CD8-positive, alpha-beta T cell (primary cell): ENCODE measurements at regions of chr19 and their contacts with region 1.

Region 1: GRCh38 chr19:18058208-18059030 is 28.3 kb downstream of the IL12RB1 start:
- DNase-seq: peak; percentile 67 to 92 (median 83)
- ATAC-seq: peak; percentile 98
- H3K4me3 ChIP-seq: peak overlapping the region in 1 of 2 experiments; percentile 23
- H3K4me3 Mint-ChIP-seq: peak overlapping the region; percentile 18
- H3K27ac ChIP-seq: peak overlapping the region; percentile 35 to 60
- H3K27ac Mint-ChIP-seq: peak overlapping the region; percentile 86
- H3K4me1 ChIP-seq: peaks cover 17% of the 10 kb centered on the region
- H3K4me1 Mint-ChIP-seq: peaks cover 12% of the 10 kb centered on the region
- H3K27me3 ChIP-seq: no peaks in the 10 kb centered on the region
- H3K27me3 Mint-ChIP-seq: no peaks in the 10 kb centered on the region
- CTCF ChIP-seq: peak; percentile 95

Region 2: DNA sequence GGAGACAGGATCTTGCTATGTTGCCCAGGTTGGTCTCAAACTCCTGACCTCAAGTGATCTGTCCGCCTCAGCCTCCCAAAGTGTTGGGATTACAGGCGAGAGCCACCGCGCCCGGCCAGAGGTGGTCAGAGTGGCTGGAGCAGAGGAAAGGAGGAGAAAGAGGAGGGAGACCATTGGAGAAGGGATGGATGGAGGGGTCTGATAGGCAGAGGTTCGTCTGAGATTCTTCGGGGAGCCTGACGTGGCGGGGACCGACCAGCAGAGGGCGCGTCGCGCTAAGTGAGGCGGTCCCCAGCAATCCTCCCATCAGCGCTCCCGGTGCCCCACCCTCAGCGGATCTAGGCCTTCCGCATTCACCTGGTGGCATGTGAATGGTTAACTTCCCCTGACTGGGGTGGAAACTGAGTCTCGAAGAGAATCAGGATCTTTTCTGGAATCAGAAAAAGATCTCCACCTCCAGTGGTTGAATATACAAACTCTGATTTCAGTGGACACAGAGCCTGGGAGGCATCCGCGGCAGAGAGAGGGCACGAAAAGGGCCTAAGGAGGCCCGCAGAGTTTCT is 712.2 kb before region 1 on chr19:
- CTCF ChIA-PET with region 1: no interaction called
- POLR2A ChIA-PET with region 1: no interaction called
- intact Hi-C with region 1: no loop called
- DNase-seq: peak; percentile 57 to 87 (median 78)
- ATAC-seq: peak; percentile 99
- H3K4me3 ChIP-seq: no peak overlapping the region
- H3K4me3 Mint-ChIP-seq: no peak overlapping the region
- H3K27ac ChIP-seq: no peak overlapping the region
- H3K27ac Mint-ChIP-seq: no peak overlapping the region
- H3K4me1 ChIP-seq: no peaks in the 10 kb centered on the region
- H3K4me1 Mint-ChIP-seq: peaks cover 5% of the 10 kb centered on the region
- H3K27me3 ChIP-seq: peaks cover 0 to 5% of the 10 kb centered on the region in 2 experiments
- H3K27me3 Mint-ChIP-seq: peaks cover 8% of the 10 kb centered on the region
- CTCF ChIP-seq: peak; percentile 97

Region 3: DNA sequence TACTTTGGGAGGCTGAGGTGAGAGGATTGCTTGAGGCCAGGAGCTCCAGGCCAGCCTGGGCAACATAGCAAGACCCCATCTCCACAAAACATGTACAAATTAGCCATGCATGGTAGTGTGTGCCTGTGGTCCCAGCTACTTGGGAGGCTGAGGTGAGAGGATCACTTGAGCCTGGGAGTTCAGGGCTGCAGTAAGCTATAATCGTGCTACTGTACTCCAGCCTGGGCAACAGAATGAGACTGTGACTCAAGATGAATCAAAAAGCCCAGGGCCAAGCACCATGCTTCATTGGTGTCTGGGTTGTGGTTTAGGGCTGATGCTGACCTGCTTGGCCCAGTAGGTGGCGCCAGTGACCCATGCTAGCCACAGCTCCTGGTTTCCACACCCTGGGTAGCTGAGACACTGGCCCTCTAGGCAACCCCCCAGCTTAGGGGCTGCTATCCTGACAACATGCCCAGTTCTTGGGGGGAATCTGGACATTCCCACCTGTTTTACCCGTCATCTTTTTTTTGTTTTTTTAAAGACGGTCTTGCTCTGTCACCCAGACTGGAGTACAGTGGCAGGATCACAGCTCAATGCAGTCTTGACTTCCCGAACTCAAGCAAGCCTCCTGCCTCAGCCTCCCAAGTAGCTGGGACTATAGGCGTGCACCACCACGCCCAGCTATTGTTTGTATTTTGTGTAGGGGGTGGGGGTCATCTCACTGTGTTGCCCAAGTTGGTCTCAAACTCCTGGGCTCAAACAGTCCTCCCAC is 120.2 kb before region 1 on chr19:
- CTCF ChIA-PET with region 1: interaction called, 55 read pairs
- POLR2A ChIA-PET with region 1: interaction called, 3 read pairs
- intact Hi-C with region 1: loop called (anchors 1 kb)
- DNase-seq: peak; percentile 69 to 90 (median 83)
- ATAC-seq: peak; percentile 99
- H3K4me3 ChIP-seq: no peak overlapping the region
- H3K4me3 Mint-ChIP-seq: no peak overlapping the region
- H3K27ac ChIP-seq: no peak overlapping the region
- H3K27ac Mint-ChIP-seq: no peak overlapping the region
- H3K4me1 ChIP-seq: peaks cover 7% of the 10 kb centered on the region
- H3K4me1 Mint-ChIP-seq: peaks cover 8% of the 10 kb centered on the region
- H3K27me3 ChIP-seq: no peaks in the 10 kb centered on the region
- H3K27me3 Mint-ChIP-seq: no peaks in the 10 kb centered on the region
- CTCF ChIP-seq: peak; percentile 82

Region 4: DNA sequence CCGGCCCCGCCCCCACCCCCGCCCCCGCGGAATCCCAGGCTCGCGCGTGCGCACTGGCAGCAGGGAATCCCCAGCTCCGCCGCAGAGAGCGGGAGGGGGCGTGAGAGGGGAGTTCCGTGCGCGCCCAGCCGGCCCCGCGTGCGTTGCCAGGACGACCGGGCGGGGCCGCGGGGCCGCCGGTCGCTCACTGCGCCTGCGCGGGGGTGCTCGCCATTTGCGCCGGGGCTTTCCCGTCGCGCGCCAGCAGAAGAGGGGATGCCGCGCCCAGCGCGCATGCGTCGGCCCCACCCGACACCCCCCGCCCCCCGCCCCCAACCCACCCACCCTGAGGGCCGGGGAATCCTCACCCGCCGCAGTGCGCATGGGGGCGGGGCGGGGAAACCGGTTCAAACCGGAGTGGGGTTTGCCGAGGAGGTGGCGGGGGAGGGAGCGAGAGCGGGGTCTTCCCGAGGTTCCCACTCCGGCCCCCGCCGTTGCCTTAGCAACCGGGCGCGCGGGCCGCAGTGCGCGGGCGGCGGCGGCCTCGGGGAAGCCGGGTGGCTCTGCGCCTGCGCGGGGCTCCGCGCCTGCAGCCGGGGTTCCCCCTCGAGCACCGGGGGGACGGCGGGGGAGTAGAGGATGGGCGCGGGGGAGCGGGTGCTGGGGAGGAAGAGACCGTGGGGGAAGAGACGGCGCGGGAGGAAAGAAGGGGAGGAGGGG is 110.5 kb before region 1 on chr19:
- CTCF ChIA-PET with region 1: interaction called, 6 read pairs
- POLR2A ChIA-PET with region 1: no interaction called
- intact Hi-C with region 1: loop called in 1 of 2 experiments (anchors 1 kb)
- DNase-seq: peak; percentile 88 to 99 (median 95)
- ATAC-seq: peak; percentile 66
- H3K4me3 ChIP-seq: peak overlapping the region; percentile 35 to 57
- H3K4me3 Mint-ChIP-seq: peak overlapping the region; percentile 74
- H3K27ac ChIP-seq: peak overlapping the region; percentile 44 to 93
- H3K27ac Mint-ChIP-seq: no peak overlapping the region
- H3K4me1 ChIP-seq: peaks cover 53% of the 10 kb centered on the region
- H3K4me1 Mint-ChIP-seq: peaks cover 49% of the 10 kb centered on the region
- H3K27me3 ChIP-seq: peaks cover 39% of the 10 kb centered on the region in 2 experiments
- H3K27me3 Mint-ChIP-seq: peaks cover 30% of the 10 kb centered on the region
- CTCF ChIP-seq: no peak

Region 5: GRCh38 chr19:18044825-18045304 is 13.6 kb before region 1 on chr19:
- CTCF ChIA-PET with region 1: interaction called, 33 read pairs
- POLR2A ChIA-PET with region 1: interaction called, 10 read pairs
- intact Hi-C with region 1: no loop called
- DNase-seq: peak; percentile 68 to 96 (median 87)
- ATAC-seq: peak; percentile 91
- H3K4me3 ChIP-seq: peak overlapping the region; percentile 44
- H3K4me3 Mint-ChIP-seq: peak overlapping the region; percentile 79
- H3K27ac ChIP-seq: peak overlapping the region; percentile 55 to 61
- H3K27ac Mint-ChIP-seq: peak overlapping the region; percentile 95
- H3K4me1 ChIP-seq: peaks cover 33% of the 10 kb centered on the region
- H3K4me1 Mint-ChIP-seq: peaks cover 43% of the 10 kb centered on the region
- H3K27me3 ChIP-seq: no peaks in the 10 kb centered on the region
- H3K27me3 Mint-ChIP-seq: no peaks in the 10 kb centered on the region
- CTCF ChIP-seq: no peak

Region 6: DNA sequence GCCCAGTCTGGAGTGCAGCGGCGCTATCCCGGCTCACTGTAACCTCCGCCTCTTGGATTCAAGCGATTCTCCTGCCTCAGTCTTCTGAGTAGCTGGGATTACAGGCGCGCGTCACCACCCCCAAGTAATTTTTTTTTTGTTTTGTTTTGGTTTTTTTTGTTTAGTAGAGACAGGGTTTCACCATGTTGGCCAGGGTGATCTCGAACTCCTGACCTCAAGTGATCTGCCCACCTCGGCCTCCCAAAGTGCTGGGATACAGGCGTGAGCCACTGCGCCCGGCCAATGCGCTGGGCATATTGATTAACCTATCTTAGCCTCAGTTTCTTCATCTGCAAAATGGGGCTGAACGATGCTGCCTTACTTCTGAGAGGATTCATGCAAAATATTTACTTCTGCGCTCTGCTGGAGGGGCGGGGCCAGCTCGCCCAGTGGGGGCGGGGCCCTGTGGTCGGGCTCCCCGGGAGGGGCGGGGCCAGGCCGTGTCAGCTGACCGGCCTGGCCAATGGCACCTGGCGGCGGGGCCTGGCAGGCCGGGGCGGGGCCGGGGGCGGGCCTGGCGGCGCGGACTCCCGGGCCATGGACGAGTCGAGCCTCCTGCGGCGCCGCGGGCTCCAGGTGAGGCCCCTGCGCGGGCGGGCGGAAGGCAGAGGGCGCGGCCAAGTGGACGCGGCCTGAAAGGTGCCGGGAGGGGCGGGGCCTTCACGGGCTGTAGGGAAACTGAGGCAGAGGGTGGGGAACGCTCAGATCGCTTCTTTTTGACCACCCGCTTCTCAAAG is 39.0 kb after region 1 on chr19 and contains the start of gene MAST3:
- CTCF ChIA-PET with region 1: interaction called, 3 read pairs
- POLR2A ChIA-PET with region 1: no interaction called
- intact Hi-C with region 1: loop called in 1 of 2 experiments (anchors 5 kb)
- DNase-seq: peak; percentile 84 to 95 (median 92)
- ATAC-seq: peak; percentile 96
- H3K4me3 ChIP-seq: peak within 1 kb of the TSS; percentile 63 to 66
- H3K4me3 Mint-ChIP-seq: peak within 1 kb of the TSS; percentile 89
- H3K27ac ChIP-seq: peak within 1 kb of the TSS; percentile 26 to 40
- H3K27ac Mint-ChIP-seq: peak within 1 kb of the TSS; percentile 72
- H3K4me1 ChIP-seq: peaks cover 35% of the 10 kb centered on the region
- H3K4me1 Mint-ChIP-seq: peaks cover 47% of the 10 kb centered on the region
- H3K27me3 ChIP-seq: no peaks in the 10 kb centered on the region
- H3K27me3 Mint-ChIP-seq: no peaks in the 10 kb centered on the region
- CTCF ChIP-seq: no peak
- total RNA-seq, gene MAST3: 13.7 to 15.2 TPM